ENCODE measurements at regions of chr15 and their contacts with region 1.

Region 1: GRCh38 chr15:80041494-80042253 is 17.8 kb upstream of the ZFAND6 start:
- DNase-seq: no peak
- H3K4me3 ChIP-seq: no peak overlapping the region
- H3K27ac ChIP-seq: no peak overlapping the region
- H3K4me1 ChIP-seq: no peaks in the 10 kb centered on the region
- H3K27me3 ChIP-seq: no peaks in the 10 kb centered on the region
- CTCF ChIP-seq: no peak

Region 2: GRCh38 chr15:79769069-79769481 is 272.6 kb before region 1 on chr15:
- CTCF ChIA-PET with region 1: interaction called, 13 read pairs
- POLR2A ChIA-PET with region 1: no interaction called
- intact Hi-C with region 1: no loop called
- DNase-seq: peak; percentile 9
- H3K4me3 ChIP-seq: no peak overlapping the region
- H3K27ac ChIP-seq: no peak overlapping the region
- H3K4me1 ChIP-seq: no peaks in the 10 kb centered on the region
- H3K27me3 ChIP-seq: peaks cover 20% of the 10 kb centered on the region
- CTCF ChIP-seq: peak; percentile 50

Measured in A673 (cell line).